Ovary (tissue), 10 donors: ENCODE measurements at regions of chr1 and their contacts with region 1.

Region 1: GRCh38 chr1:93909146-93910050 is at the start of gene GCLM:
- DNase-seq: peak; percentile 88 to 95 (median 93)
- H3K4me3 ChIP-seq: peak within 1 kb of the TSS; percentile 75
- H3K27ac ChIP-seq: peak within 1 kb of the TSS; percentile 82 to 87
- H3K4me1 ChIP-seq: no peaks in the 10 kb centered on the region
- H3K27me3 ChIP-seq: no peaks in the 10 kb centered on the region
- CTCF ChIP-seq: peak; percentile 66 to 97 (median 96)
- EP300 ChIP-seq: no peak
- POLR2A ChIP-seq: peak; percentile 61
- total RNA-seq, gene GCLM: 6.6 to 18.4 (median 10.4) TPM

Region 2: DNA sequence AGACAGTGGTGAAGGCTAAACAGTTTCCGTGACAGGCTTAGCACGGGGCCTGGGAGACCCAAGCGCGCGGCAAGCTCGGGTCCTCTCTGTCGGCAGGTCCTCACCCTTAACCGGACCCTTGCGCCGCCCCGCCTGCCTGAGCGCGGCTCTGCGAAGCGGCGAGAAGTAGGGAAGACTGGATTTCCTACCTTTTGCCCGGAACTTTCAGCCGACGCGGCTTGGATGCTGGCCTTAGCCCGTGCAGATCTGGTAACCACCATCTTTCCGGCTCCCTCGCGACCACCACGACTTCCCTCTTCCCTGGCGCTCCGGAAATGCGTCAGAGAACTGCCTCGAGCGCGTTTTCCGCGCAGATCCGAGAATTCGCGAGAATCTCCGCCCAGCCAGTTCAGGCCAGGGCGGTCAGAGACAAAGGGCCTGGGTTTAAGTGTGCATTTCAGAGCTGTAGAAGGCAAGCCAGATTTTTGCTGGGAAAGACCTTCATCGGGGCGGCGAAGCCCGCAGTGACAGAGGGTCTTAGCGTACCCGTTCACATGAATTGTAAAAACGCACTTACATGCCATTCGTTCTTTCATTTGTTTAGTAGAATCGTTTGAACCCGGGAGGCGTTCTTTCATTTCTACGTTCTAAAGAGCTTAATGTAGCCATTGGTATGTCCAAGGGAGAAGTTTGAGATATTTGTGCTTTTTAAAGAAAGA is 30.4 kb before region 1 on chr1 and contains the start of gene DNTTIP2:
- intact Hi-C with region 1: loop called in 1 of 4 experiments (anchors 2 kb)
- DNase-seq: peak; percentile 88 to 94 (median 90)
- H3K4me3 ChIP-seq: peak within 1 kb of the TSS; percentile 91
- H3K27ac ChIP-seq: peak within 1 kb of the TSS; percentile 83 to 89
- H3K4me1 ChIP-seq: no peaks in the 10 kb centered on the region
- H3K27me3 ChIP-seq: no peaks in the 10 kb centered on the region
- CTCF ChIP-seq: peak in 1 of 3 donors; percentile 8
- EP300 ChIP-seq: no peak
- POLR2A ChIP-seq: peak; percentile 89
- total RNA-seq, gene DNTTIP2: 17.8 to 60.0 (median 42.0) TPM

Region 3: GRCh38 chr1:94142022-94142421 is 232.6 kb after region 1 on chr1:
- intact Hi-C with region 1: no loop called
- DNase-seq: no peak
- H3K4me3 ChIP-seq: no peak overlapping the region
- H3K27ac ChIP-seq: no peak overlapping the region
- H3K4me1 ChIP-seq: no peaks in the 10 kb centered on the region
- H3K27me3 ChIP-seq: no peaks in the 10 kb centered on the region
- CTCF ChIP-seq: no peak
- EP300 ChIP-seq: no peak
- POLR2A ChIP-seq: no peak